ENCODE measurements at regions of chr1 and their contacts with region 1.

Region 1: GRCh38 chr1:222455188-222455879 is 92.6 kb downstream of the HHIPL2 start:
- DNase-seq: peak; percentile 69 to 95 (median 84)
- H3K4me3 ChIP-seq: peak overlapping the region in 1 of 4 donors; percentile 15
- H3K27ac ChIP-seq: no peak overlapping the region
- H3K4me1 ChIP-seq: no peaks in the 10 kb centered on the region
- H3K27me3 ChIP-seq: no peaks in the 10 kb centered on the region
- CTCF ChIP-seq: peak; percentile 86 to 94 (median 88)
- POLR2A ChIP-seq: no peak

Region 2: DNA sequence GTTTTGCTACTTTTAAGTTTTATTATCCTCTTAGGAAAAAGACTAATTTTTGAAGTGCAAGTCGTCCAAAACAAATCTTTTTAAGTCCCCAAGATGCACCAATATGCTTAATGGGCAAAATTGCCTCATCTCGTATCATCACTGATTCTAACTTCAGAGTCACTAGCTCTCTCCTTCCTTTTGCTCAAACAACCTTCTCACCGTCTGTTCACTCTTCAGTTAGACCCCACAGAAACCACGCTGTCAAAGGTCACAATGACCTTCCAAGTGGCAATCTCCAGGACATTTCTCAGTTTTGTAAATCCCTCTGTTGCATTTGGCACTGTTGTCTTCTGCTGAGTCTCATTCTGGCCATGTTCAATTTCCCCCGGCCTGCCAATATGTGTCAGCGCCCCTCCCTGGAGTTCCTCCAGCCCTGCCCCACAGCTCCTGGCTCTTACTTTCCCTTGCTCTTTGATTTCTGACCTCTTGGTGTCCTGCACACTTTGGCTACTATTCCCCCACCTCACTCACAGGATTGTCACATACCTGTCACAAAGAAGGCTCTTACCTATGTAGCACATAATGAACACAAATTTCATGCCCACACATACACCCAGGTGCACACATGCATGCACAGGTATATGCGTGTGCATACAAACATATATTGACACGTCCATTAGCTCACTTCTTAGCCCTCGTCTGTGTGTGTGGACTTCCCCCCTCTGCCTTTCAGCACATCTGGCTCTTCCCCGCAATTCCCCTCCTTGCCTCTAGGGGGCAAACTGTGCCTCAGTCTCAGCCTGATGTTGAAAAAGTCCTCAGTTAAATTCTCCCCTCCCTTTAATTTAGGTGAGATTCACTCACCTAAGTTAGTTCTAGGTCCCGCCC is 359.5 kb before region 1 on chr1:
- intact Hi-C with region 1: loop called (anchors 5 kb)
- DNase-seq: peak in 6 of 7 donors; percentile 29 to 67 (median 53)
- H3K4me3 ChIP-seq: no peak overlapping the region
- H3K27ac ChIP-seq: no peak overlapping the region
- H3K4me1 ChIP-seq: no peaks in the 10 kb centered on the region
- H3K27me3 ChIP-seq: no peaks in the 10 kb centered on the region
- CTCF ChIP-seq: peak; percentile 53 to 88 (median 70)
- POLR2A ChIP-seq: no peak

Region 3: GRCh38 chr1:222547944-222548671 is 92.8 kb after region 1 on chr1 and contains the start of gene HHIPL2:
- intact Hi-C with region 1: no loop called
- DNase-seq: no peak
- H3K4me3 ChIP-seq: no peak within 1 kb of the TSS
- H3K27ac ChIP-seq: no peak within 1 kb of the TSS
- H3K4me1 ChIP-seq: no peaks in the 10 kb centered on the region
- H3K27me3 ChIP-seq: no peaks in the 10 kb centered on the region
- CTCF ChIP-seq: no peak
- POLR2A ChIP-seq: no peak
- total RNA-seq, gene HHIPL2: 0.11 to 3.4 (median 0.18) TPM in 5 of 9 donors, not detected in the others

Measured in adrenal gland (tissue), 19 donors.